Endothelial cell of umbilical vein (primary cell): ENCODE measurements at regions of chrX and their contacts with region 1.

Region 1: DNA sequence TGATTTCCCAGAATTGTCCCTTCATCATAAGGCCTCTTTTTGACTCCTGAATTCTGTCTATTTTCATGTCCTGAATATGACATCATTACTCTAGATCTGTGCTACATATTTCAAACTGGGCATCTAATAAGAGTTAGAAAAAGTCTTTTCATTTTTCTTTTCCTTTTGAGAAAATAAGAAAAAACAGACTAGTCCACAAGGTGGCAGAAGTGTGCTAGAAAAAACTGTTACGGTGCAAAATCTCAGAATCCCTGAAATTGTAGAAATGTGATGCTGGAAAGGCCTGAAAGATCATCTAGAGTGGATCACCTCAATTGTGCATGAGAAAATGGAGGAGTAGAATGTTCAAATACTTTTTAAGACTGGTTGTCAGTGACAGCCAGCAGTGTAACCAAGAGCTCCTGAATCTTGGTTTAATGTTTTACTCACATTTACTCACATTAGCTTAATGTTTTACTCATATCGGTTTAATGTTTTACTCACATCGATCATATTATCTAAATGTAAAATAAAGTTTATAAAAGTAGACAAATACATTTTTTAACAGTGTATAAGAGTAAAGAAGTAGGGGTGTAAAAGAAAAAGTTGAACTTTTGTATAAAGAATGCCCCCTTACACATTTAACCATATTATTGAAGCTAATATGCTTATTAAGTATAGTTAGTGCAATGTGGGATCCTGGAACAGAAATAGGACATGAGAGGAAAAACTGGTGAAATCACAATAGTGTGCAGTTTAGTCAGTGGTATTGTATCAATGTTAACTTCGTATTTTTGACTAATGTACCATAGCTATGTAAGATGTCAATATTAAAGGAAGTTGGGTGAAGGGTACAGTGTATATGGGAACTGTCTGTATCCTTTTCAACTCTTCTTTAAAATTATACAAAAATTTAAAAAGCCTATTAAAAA is 15.2 kb downstream of the ASB11 start:
- DNase-seq: peak; percentile 53
- H3K4me3 ChIP-seq: no peak overlapping the region
- H3K27ac ChIP-seq: peak overlapping the region; percentile 28
- H3K4me1 ChIP-seq: peaks cover 21% of the 10 kb centered on the region
- H3K27me3 ChIP-seq: no peaks in the 10 kb centered on the region
- CTCF ChIP-seq: peak; percentile 12 to 20
- POLR2A ChIP-seq: no peak

Region 2: GRCh38 chrX:15146515-15146914 is 153.7 kb before region 1 on chrX:
- CTCF ChIA-PET with region 1: no interaction called
- POLR2A ChIA-PET with region 1: no interaction called
- dilution Hi-C with region 1: no loop called
- intact Hi-C with region 1: no loop called
- DNase-seq: peak; percentile 12
- H3K4me3 ChIP-seq: no peak overlapping the region
- H3K27ac ChIP-seq: no peak overlapping the region
- H3K4me1 ChIP-seq: no peaks in the 10 kb centered on the region
- H3K27me3 ChIP-seq: peaks cover 0 to 5% of the 10 kb centered on the region in 2 experiments
- CTCF ChIP-seq: peak; percentile 33 to 46
- POLR2A ChIP-seq: no peak

Region 3: GRCh38 chrX:15158736-15159406 is 141.3 kb before region 1 on chrX:
- CTCF ChIA-PET with region 1: no interaction called
- POLR2A ChIA-PET with region 1: no interaction called
- dilution Hi-C with region 1: no loop called
- intact Hi-C with region 1: no loop called
- DNase-seq: no peak
- H3K4me3 ChIP-seq: no peak overlapping the region
- H3K27ac ChIP-seq: no peak overlapping the region
- H3K4me1 ChIP-seq: no peaks in the 10 kb centered on the region
- H3K27me3 ChIP-seq: no peaks in the 10 kb centered on the region
- CTCF ChIP-seq: no peak
- POLR2A ChIP-seq: no peak

Region 4: DNA sequence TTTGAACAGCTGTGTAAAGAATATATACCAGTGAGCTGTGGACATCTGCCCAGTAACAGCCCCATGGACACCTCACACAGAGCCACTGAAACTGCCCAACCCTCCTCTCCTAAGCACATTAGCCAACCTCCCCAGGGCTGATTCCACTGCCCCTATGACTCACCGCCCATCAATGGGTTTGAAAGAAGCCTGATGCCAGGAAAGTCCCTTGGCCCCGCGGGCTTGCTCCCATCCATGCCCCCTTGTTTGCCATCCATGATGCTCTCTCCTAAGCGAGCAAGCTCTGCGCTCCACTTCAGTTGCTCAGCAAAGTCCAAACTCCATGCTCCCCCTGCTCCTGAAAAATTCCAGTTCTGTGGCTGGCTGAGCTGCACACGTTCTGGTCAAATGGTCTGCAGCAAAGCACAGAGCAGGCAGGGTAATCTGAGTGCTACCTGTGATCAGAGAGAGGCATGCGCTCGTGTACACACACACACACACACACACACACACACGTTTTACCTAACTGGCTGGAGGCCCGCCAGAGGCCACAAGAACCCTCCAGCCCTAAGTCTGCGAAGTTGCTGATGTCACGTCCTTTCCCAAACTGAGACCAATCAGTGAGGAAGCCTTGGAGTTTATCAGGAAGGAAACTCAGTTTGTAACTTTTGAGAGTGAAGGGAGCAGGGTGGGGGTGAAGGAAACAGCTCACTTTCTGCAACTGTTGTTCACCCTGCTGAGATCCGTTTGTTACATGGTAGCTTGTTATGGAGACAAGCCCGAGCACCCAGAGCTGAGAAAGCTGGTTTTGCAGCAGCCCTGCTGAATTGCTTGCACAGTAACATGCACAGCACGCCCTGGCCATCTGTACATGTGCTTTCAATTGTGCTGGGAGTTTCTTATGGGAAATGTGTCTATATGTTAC is 30.3 kb before region 1 on chrX and contains the start of gene ASB9:
- CTCF ChIA-PET with region 1: interaction called, 3 read pairs
- POLR2A ChIA-PET with region 1: no interaction called
- dilution Hi-C with region 1: no loop called
- intact Hi-C with region 1: loop called (anchors 1 kb)
- DNase-seq: peak; percentile 64
- H3K4me3 ChIP-seq: peak within 1 kb of the TSS in 2 of 3 experiments; percentile 18 to 37
- H3K27ac ChIP-seq: peak within 1 kb of the TSS; percentile 43
- H3K4me1 ChIP-seq: peaks cover 4% of the 10 kb centered on the region
- H3K27me3 ChIP-seq: no peaks in the 10 kb centered on the region
- CTCF ChIP-seq: no peak
- POLR2A ChIP-seq: no peak
- total RNA-seq, gene ASB9: 5.6 and 7.6 TPM in 2 replicates

Region 5: DNA sequence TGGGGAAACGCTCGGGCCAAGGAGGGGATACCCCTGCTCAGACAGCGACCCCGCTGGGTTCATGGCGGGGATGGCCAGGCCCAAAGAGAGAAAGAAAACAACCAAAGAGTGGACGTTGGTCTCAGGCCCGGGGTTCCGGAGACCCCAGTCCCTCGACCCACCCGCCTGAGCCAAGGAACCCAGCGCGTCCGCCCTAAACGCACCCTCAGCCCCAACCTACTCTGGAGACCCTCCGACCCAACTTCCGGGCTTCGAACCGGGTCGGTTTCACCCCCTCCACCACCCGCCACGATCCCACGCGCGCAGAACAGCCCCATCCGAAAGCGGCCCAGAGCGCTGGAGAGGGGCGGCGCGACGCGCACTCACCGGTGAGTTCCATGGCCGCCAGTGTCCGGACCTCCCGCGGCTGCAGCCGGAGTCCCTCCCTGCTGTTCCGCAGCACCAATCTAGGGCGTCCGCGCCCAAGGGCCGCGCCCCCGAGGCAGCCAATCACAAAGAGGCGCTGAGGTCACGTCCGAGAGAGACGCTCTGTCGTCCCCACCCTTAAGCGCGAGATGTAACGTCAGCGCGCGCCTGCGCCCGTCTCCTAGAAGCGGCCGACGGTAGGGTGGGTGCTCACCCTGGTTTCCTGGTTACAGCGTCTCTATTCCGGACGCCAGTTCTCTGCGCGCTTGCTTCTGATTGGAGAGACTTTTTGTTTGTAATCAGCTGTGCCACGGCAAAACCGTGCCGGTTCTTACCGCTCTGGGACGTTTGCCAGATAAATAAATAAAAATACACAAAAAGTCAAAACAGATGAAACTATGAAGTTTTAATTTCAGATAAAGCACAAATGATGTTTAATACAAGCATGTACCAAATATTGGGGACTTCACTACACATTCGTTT is 35.2 kb after region 1 on chrX and contains the start of gene PIGA:
- CTCF ChIA-PET with region 1: interaction called, 4 read pairs
- POLR2A ChIA-PET with region 1: no interaction called
- dilution Hi-C with region 1: no loop called
- intact Hi-C with region 1: loop called (anchors 1 kb)
- DNase-seq: peak; percentile 97
- H3K4me3 ChIP-seq: peak within 1 kb of the TSS; percentile 39 to 89 (median 60)
- H3K27ac ChIP-seq: peak within 1 kb of the TSS; percentile 81
- H3K4me1 ChIP-seq: peaks cover 4% of the 10 kb centered on the region
- H3K27me3 ChIP-seq: peaks cover 5 to 6% of the 10 kb centered on the region in 2 experiments
- CTCF ChIP-seq: no peak
- POLR2A ChIP-seq: no peak
- total RNA-seq, gene PIGA: 12.1 TPM in 2 replicates

Region 6: DNA sequence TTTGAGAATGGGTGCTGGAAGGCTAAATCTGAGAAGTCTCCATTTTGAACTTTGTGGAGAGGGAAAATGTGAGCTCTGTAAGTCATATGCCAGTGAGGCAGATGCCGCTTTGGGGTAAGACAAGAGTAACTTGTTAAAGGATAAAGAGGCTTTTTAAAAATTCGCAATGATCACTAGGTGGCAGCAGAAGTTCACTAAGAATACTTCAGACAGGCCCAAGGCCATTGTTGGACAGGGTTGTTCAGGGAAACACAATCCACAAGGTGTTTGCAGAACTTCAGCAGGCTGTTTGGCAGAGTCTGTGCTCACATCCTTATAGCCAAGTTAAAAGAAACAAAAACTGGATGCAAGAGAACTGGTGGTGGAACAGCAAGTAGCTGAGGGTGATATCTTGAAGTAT is 48.9 kb after region 1 on chrX:
- CTCF ChIA-PET with region 1: interaction called, 5 read pairs
- POLR2A ChIA-PET with region 1: no interaction called
- dilution Hi-C with region 1: no loop called
- intact Hi-C with region 1: loop called (anchors 1 kb)
- DNase-seq: peak; percentile 64
- H3K4me3 ChIP-seq: no peak overlapping the region
- H3K27ac ChIP-seq: no peak overlapping the region
- H3K4me1 ChIP-seq: no peaks in the 10 kb centered on the region
- H3K27me3 ChIP-seq: no peaks in the 10 kb centered on the region
- CTCF ChIP-seq: peak; percentile 15 to 38
- POLR2A ChIP-seq: no peak

Region 7: DNA sequence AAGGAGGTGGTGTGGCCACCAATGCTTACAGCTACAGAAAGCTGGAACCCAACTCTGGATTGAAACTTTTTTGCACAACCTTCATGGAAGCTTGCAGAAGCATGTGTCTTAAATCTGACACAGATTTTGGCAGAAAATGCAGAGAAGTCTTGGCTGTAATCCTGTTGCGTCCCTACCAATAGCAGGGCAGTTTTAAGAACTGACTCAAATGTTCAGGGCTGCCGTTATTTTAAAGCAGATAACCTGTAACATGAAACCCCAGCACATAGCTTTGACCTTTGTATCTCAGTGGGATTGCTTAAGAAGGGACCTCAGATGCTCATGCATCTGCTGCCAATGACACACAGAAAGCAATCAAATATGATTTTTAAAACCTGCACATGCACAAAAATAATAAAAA is 84.1 kb after region 1 on chrX and contains the start of gene VEGFD:
- CTCF ChIA-PET with region 1: no interaction called
- POLR2A ChIA-PET with region 1: no interaction called
- dilution Hi-C with region 1: no loop called
- intact Hi-C with region 1: loop called (anchors 5 kb)
- DNase-seq: no peak
- H3K4me3 ChIP-seq: no peak within 1 kb of the TSS
- H3K27ac ChIP-seq: no peak within 1 kb of the TSS
- H3K4me1 ChIP-seq: peaks cover under 1% of the 10 kb centered on the region
- H3K27me3 ChIP-seq: no peaks in the 10 kb centered on the region
- CTCF ChIP-seq: no peak
- POLR2A ChIP-seq: no peak
- total RNA-seq, gene VEGFD: 0.64 and 0.67 TPM in 2 replicates